ENCODE measurements at regions of chr20 and their contacts with region 1.

Region 1: DNA sequence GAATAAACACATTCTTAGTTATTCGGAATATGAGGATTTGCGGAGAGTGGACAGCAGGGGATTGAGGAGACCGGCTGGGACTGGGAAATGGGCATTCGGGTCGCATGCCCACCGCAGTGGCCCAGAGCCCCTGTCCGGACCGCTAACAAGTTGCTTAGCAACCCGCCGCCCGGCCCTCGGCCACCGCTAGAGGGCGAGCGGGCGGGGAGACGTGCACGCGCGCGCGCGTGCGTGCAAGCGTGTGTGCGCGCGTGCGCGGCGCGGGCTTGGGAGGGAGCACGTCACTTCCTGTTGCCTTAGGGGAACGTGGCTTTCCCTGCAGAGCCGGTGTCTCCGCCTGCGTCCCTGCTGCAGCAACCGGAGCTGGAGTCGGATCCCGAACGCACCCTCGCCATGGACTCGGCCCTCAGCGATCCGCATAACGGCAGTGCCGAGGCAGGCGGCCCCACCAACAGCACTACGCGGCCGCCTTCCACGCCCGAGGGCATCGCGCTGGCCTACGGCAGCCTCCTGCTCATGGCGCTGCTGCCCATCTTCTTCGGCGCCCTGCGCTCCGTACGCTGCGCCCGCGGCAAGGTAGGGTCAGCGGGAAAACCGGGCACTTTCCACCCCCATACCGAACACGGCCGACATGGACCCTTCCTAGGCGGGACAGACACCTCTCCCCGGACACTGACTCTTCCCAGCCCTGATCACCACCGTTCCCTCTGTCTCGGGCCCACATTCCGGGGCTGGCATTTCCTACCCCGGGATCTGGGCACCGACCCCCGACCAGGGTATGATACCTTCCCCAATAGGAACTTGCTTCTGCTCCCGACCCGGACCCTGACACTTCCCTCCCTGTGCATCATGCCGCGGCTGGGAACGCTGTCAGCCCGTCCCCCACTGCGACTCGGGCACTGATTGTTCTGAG is at the start of gene HM13:
- DNase-seq: peak; percentile 97 to 98
- H3K4me3 ChIP-seq: peak within 1 kb of the TSS; percentile 74
- H3K4me3 Mint-ChIP-seq: no peak within 1 kb of the TSS
- H3K27ac Mint-ChIP-seq: no peak within 1 kb of the TSS
- H3K4me1 ChIP-seq: peaks cover 22% of the 10 kb centered on the region
- H3K4me1 Mint-ChIP-seq: no peaks in the 10 kb centered on the region
- H3K27me3 ChIP-seq: no peaks in the 10 kb centered on the region
- H3K27me3 Mint-ChIP-seq: no peaks in the 10 kb centered on the region
- CTCF ChIP-seq: peak; percentile 98 to 100
- total RNA-seq, gene HM13: 435 and 443 TPM in 2 replicates

Region 2: DNA sequence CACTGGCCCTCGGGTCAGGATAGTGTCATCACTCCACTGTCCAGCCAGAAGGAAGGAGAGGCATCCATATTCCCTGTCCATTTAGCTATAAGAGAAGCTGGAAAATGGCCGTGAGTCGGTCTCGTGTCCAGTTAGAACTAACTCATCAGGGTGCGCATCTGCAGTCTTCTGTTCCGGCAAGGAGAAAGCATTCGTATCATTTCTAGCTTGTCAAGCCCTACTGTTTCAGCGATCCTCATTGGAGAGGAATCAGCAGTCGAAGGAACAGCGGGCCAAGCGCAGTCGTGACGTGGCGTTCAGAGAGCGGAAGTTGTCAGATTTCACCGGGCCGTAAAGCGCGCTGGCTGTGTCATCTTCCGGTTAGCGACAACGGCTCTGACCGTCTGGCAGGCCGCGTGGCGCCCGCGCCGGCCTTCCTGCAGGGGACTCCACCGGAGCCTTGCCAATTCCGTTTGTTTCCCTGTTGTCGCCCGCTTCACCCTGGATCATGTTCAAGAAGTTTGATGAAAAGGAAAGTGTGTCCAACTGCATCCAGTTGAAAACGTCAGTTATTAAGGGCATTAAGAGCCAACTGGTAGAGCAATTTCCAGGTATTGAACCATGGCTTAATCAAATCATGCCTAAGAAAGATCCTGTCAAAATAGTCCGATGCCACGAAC is 32.7 kb after region 1 on chr20:
- CTCF ChIA-PET with region 1: interaction called, 3 read pairs
- POLR2A ChIA-PET with region 1: no interaction called
- intact Hi-C with region 1: loop called (anchors 2 kb)
- DNase-seq: peak; percentile 81 to 85
- H3K4me3 ChIP-seq: peak overlapping the region; percentile 26
- H3K4me3 Mint-ChIP-seq: peak overlapping the region; percentile 69
- H3K27ac Mint-ChIP-seq: peak overlapping the region; percentile 80
- H3K4me1 ChIP-seq: peaks cover 2% of the 10 kb centered on the region; the same call in 1 of the 2 replicates
- H3K4me1 Mint-ChIP-seq: peaks cover 4% of the 10 kb centered on the region
- H3K27me3 ChIP-seq: no peaks in the 10 kb centered on the region
- H3K27me3 Mint-ChIP-seq: no peaks in the 10 kb centered on the region
- CTCF ChIP-seq: peak in 1 of 2 experiments; percentile 11

Measured in Caco-2 (cell line).